Caco-2 (cell line): ENCODE measurements at regions of chr3 and their contacts with region 1.

Region 1: GRCh38 chr3:194682694-194683310 is 2.9 kb upstream of the FAM43A start:
- DNase-seq: peak; percentile 83 to 84
- H3K4me3 ChIP-seq: no peak overlapping the region
- H3K4me3 Mint-ChIP-seq: no peak overlapping the region
- H3K27ac Mint-ChIP-seq: no peak overlapping the region
- H3K4me1 ChIP-seq: peaks cover 10% of the 10 kb centered on the region; the same call in 1 of the 2 replicates
- H3K4me1 Mint-ChIP-seq: peaks cover 7% of the 10 kb centered on the region
- H3K27me3 ChIP-seq: no peaks in the 10 kb centered on the region
- H3K27me3 Mint-ChIP-seq: no peaks in the 10 kb centered on the region
- CTCF ChIP-seq: peak; percentile 82 to 83

Region 2: DNA sequence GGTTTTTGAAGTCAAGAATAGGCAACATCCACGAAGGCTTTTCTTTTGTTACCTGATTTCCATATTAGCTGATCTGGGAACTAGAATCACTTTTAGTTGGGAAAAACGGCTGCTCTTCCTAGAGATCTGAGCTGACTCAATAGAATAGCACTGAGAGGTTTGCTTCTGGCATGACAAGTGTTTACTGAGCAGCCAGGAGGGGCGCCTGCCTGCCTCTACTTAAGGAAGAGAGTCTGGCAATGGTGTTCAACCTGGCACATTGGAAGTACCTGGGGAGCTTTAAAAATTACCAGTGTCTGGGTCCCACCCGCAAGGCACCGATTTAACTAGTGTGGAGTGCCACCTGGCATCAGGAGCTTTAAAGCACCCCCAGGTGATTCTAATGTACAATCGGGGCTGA is 37.2 kb after region 1 on chr3:
- CTCF ChIA-PET with region 1: interaction called, 6 read pairs
- POLR2A ChIA-PET with region 1: interaction called, 4 read pairs
- intact Hi-C with region 1: loop called (anchors 5 kb)
- DNase-seq: no peak
- H3K4me3 ChIP-seq: no peak overlapping the region
- H3K4me3 Mint-ChIP-seq: no peak overlapping the region
- H3K27ac Mint-ChIP-seq: no peak overlapping the region
- H3K4me1 ChIP-seq: peaks cover 21% of the 10 kb centered on the region
- H3K4me1 Mint-ChIP-seq: peaks cover 29% of the 10 kb centered on the region
- H3K27me3 ChIP-seq: no peaks in the 10 kb centered on the region
- H3K27me3 Mint-ChIP-seq: no peaks in the 10 kb centered on the region
- CTCF ChIP-seq: no peak

Region 3: GRCh38 chr3:194871143-194871863 is 188.5 kb after region 1 on chr3:
- CTCF ChIA-PET with region 1: interaction called, 11 read pairs
- POLR2A ChIA-PET with region 1: no interaction called
- intact Hi-C with region 1: loop called (anchors 10 kb)
- DNase-seq: peak; percentile 72 to 82
- H3K4me3 ChIP-seq: no peak overlapping the region
- H3K4me3 Mint-ChIP-seq: no peak overlapping the region
- H3K27ac Mint-ChIP-seq: no peak overlapping the region
- H3K4me1 ChIP-seq: peaks cover 28% of the 10 kb centered on the region
- H3K4me1 Mint-ChIP-seq: peaks cover 19% of the 10 kb centered on the region
- H3K27me3 ChIP-seq: no peaks in the 10 kb centered on the region
- H3K27me3 Mint-ChIP-seq: no peaks in the 10 kb centered on the region
- CTCF ChIP-seq: no peak

Region 4: GRCh38 chr3:194985031-194985578 is 302.3 kb after region 1 on chr3:
- CTCF ChIA-PET with region 1: interaction called, 21 read pairs
- POLR2A ChIA-PET with region 1: no interaction called
- intact Hi-C with region 1: loop called (anchors 1 kb)
- DNase-seq: peak; percentile 74 to 77
- H3K4me3 ChIP-seq: peak overlapping the region; percentile 38
- H3K4me3 Mint-ChIP-seq: peak overlapping the region; percentile 57
- H3K27ac Mint-ChIP-seq: no peak overlapping the region
- H3K4me1 ChIP-seq: no peaks in the 10 kb centered on the region
- H3K4me1 Mint-ChIP-seq: no peaks in the 10 kb centered on the region
- H3K27me3 ChIP-seq: no peaks in the 10 kb centered on the region
- H3K27me3 Mint-ChIP-seq: no peaks in the 10 kb centered on the region
- CTCF ChIP-seq: peak in 1 of 2 experiments; percentile 66

Region 5: GRCh38 chr3:195259475-195260279 is 576.9 kb after region 1 on chr3:
- CTCF ChIA-PET with region 1: interaction called, 6 read pairs
- POLR2A ChIA-PET with region 1: no interaction called
- intact Hi-C with region 1: loop called (anchors 1 kb)
- DNase-seq: peak; percentile 94
- H3K4me3 ChIP-seq: peak overlapping the region; percentile 83
- H3K4me3 Mint-ChIP-seq: peak overlapping the region; percentile 70
- H3K27ac Mint-ChIP-seq: peak overlapping the region; percentile 69
- H3K4me1 ChIP-seq: peaks cover 9% of the 10 kb centered on the region; the same call in 1 of the 2 replicates
- H3K4me1 Mint-ChIP-seq: peaks cover 6% of the 10 kb centered on the region
- H3K27me3 ChIP-seq: no peaks in the 10 kb centered on the region
- H3K27me3 Mint-ChIP-seq: no peaks in the 10 kb centered on the region
- CTCF ChIP-seq: peak; percentile 18 to 73